ENCODE measurements at regions of chr4 and their contacts with region 1.

Region 1: DNA sequence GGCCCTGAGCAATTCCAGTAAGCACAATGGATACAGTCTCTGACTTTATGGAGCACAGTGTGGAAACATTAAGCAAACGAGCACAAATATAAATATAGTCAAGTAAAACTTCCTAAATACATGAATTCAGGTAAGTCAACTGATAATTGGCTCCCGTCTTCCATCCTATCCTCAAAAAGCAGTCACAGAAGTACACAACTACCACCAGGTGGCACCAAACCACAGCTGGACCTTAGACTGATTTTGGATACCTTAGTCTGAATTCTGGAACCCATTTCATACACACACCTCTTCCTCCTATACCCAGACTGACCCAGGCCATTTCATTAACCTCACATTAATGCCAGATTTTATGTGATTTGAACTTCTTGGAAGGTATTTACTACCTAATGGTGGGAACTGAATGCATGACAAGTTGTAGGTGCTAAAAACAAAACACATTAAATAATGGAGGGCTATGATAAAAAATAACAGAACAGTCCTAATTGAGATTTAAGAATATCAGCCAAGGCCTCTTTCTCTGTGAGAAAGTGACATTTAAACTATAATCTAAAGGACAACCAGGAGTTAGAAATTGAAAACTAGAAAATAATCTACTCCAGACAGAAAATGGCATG is 77.5 kb downstream of the ELF2 start:
- DNase-seq: peak; percentile 60 to 70
- H3K4me3 ChIP-seq: no peak overlapping the region
- H3K27ac ChIP-seq: no peak overlapping the region
- H3K4me1 ChIP-seq: no peaks in the 10 kb centered on the region
- H3K27me3 ChIP-seq: no peaks in the 10 kb centered on the region
- CTCF ChIP-seq: peak; percentile 73 to 81 (median 80)
- POLR2A ChIP-seq: no peak

Region 2: GRCh38 chr4:138919094-138919936 is 180.2 kb before region 1 on chr4:
- intact Hi-C with region 1: no loop called
- DNase-seq: peak; percentile 47 to 86
- H3K4me3 ChIP-seq: no peak overlapping the region
- H3K27ac ChIP-seq: no peak overlapping the region
- H3K4me1 ChIP-seq: no peaks in the 10 kb centered on the region
- H3K27me3 ChIP-seq: no peaks in the 10 kb centered on the region
- CTCF ChIP-seq: peak; percentile 40 to 66 (median 54)
- POLR2A ChIP-seq: no peak

Region 3: GRCh38 chr4:139295206-139295941 is 195.9 kb after region 1 on chr4:
- intact Hi-C with region 1: loop called (anchors 10 kb)
- DNase-seq: peak; percentile 96 to 97
- H3K4me3 ChIP-seq: peak overlapping the region; percentile 71 to 84
- H3K27ac ChIP-seq: peak overlapping the region; percentile 84 to 87
- H3K4me1 ChIP-seq: peaks cover 0 to 4% of the 10 kb centered on the region in 2 donors
- H3K27me3 ChIP-seq: no peaks in the 10 kb centered on the region
- CTCF ChIP-seq: peak; percentile 92 to 98 (median 94)
- POLR2A ChIP-seq: peak; percentile 47 to 48